ENCODE measurements at regions of chr6 and their contacts with region 1.

Region 1: GRCh38 chr6:110039364-110039980 is 61.4 kb downstream of the GPR6 start:
- DNase-seq: peak; percentile 77
- H3K4me3 ChIP-seq: peak overlapping the region in 1 of 2 experiments; percentile 54; a peak in 1 of 4 replicates
- H3K27ac ChIP-seq: no peak overlapping the region
- H3K4me1 ChIP-seq: peaks cover 0 to 2% of the 10 kb centered on the region in 2 experiments; a peak in 1 of 4 replicates
- H3K27me3 ChIP-seq: no peaks in the 10 kb centered on the region
- CTCF ChIP-seq: peak; percentile 98
- EP300 ChIP-seq: no peak
- RAD21 ChIP-seq: peak; percentile 98

Region 2: DNA sequence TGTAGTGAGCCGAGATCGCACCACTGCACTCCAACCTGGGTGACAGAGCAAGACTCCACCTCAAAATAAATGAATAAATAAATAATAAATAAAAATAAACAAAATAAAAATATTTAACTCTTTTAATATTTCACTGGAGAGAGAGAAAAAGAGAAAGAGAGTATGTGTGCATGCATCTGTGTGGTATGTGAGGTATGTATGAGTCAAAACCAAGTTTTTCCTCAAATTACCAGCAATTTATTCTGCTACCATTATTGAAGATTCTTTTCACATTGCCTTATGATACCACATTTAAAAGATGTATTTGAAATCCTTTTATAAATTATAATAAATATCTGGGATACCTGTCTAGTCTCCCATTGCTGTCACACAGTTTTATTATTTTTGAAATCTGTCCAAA is 779.3 kb before region 1 on chr6:
- CTCF ChIA-PET with region 1: no interaction called
- POLR2A ChIA-PET with region 1: no interaction called
- DNase-seq: no peak
- H3K4me3 ChIP-seq: no peak overlapping the region
- H3K27ac ChIP-seq: no peak overlapping the region; a peak in 2 of 4 replicates
- H3K4me1 ChIP-seq: peaks cover 3 to 4% of the 10 kb centered on the region in 2 experiments; a peak in 2 of 4 replicates
- H3K27me3 ChIP-seq: no peaks in the 10 kb centered on the region
- CTCF ChIP-seq: no peak
- EP300 ChIP-seq: no peak
- RAD21 ChIP-seq: no peak

Region 3: GRCh38 chr6:109526905-109527628 is 512.4 kb before region 1 on chr6:
- CTCF ChIA-PET with region 1: interaction called, 19 read pairs
- POLR2A ChIA-PET with region 1: no interaction called
- DNase-seq: peak; percentile 46
- H3K4me3 ChIP-seq: no peak overlapping the region; a peak in 1 of 4 replicates
- H3K27ac ChIP-seq: no peak overlapping the region
- H3K4me1 ChIP-seq: no peaks in the 10 kb centered on the region
- H3K27me3 ChIP-seq: no peaks in the 10 kb centered on the region
- CTCF ChIP-seq: peak; percentile 73
- EP300 ChIP-seq: no peak
- RAD21 ChIP-seq: peak; percentile 85

Region 4: GRCh38 chr6:109705258-109705657 is 334.2 kb before region 1 on chr6:
- CTCF ChIA-PET with region 1: interaction called, 295 read pairs
- POLR2A ChIA-PET with region 1: interaction called, 3 read pairs
- DNase-seq: peak; percentile 76
- H3K4me3 ChIP-seq: peak overlapping the region in 1 of 2 experiments; percentile 50; a peak in 1 of 4 replicates
- H3K27ac ChIP-seq: no peak overlapping the region
- H3K4me1 ChIP-seq: no peaks in the 10 kb centered on the region; a peak in 1 of 4 replicates
- H3K27me3 ChIP-seq: no peaks in the 10 kb centered on the region
- CTCF ChIP-seq: peak; percentile 100
- EP300 ChIP-seq: no peak
- RAD21 ChIP-seq: peak; percentile 100

Region 5: GRCh38 chr6:109718991-109719390 is 320.5 kb before region 1 on chr6:
- CTCF ChIA-PET with region 1: interaction called, 57 read pairs
- POLR2A ChIA-PET with region 1: no interaction called
- DNase-seq: no peak
- H3K4me3 ChIP-seq: no peak overlapping the region
- H3K27ac ChIP-seq: no peak overlapping the region
- H3K4me1 ChIP-seq: peaks cover 0 to 10% of the 10 kb centered on the region in 2 experiments; a peak in 2 of 4 replicates
- H3K27me3 ChIP-seq: no peaks in the 10 kb centered on the region
- CTCF ChIP-seq: no peak
- EP300 ChIP-seq: no peak
- RAD21 ChIP-seq: no peak

Region 6: GRCh38 chr6:110013386-110013785 is 26.1 kb before region 1 on chr6:
- CTCF ChIA-PET with region 1: interaction called, 10 read pairs
- POLR2A ChIA-PET with region 1: no interaction called
- DNase-seq: no peak
- H3K4me3 ChIP-seq: no peak overlapping the region
- H3K27ac ChIP-seq: no peak overlapping the region
- H3K4me1 ChIP-seq: no peaks in the 10 kb centered on the region
- H3K27me3 ChIP-seq: no peaks in the 10 kb centered on the region; the same call in 1 of the 2 replicates
- CTCF ChIP-seq: no peak
- EP300 ChIP-seq: no peak
- RAD21 ChIP-seq: no peak

Region 7: DNA sequence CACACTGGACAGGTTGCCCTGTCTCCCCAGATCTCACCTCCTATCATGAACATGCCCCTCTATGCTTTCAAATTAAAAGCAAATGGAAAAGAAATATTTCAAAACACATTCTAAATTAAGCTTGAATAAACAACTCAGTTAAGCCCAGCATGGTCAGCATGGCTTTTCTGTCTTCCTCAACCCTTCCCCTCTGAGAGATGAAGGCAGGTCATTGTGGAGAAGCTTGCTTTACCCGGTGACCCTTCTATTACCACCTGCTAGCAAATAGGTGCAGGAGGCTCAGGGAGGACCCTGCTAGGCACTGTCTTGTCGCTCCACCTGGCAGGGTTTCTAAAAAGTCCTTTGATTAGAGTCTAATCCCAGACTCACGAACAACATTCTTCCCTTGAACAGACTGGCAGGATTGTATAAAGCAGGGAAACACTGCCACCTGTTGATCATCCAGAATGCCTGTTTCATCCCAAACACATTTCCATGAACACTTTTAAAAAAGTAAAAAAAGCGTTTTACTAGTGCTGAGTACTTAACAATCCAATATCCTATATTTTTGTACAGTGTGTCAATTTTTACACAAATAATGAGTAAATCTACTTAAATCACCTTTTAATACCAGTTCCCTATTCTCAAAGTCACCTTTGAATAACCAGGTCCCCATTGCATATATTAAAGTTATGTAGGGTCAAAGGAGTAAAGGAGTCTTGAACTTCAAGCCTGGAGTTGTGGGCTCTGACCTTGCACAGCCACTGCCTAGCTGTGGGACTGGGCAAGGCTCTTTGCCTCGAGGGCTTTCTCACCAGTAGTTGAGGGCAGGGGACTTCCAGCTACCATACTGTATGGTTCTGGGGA is 14.1 kb after region 1 on chr6:
- CTCF ChIA-PET with region 1: interaction called, 50 read pairs
- POLR2A ChIA-PET with region 1: no interaction called
- DNase-seq: peak; percentile 59
- H3K4me3 ChIP-seq: no peak overlapping the region
- H3K27ac ChIP-seq: no peak overlapping the region
- H3K4me1 ChIP-seq: no peaks in the 10 kb centered on the region; a peak in 2 of 4 replicates
- H3K27me3 ChIP-seq: no peaks in the 10 kb centered on the region
- CTCF ChIP-seq: peak; percentile 80
- EP300 ChIP-seq: no peak
- RAD21 ChIP-seq: peak; percentile 85

Region 8: DNA sequence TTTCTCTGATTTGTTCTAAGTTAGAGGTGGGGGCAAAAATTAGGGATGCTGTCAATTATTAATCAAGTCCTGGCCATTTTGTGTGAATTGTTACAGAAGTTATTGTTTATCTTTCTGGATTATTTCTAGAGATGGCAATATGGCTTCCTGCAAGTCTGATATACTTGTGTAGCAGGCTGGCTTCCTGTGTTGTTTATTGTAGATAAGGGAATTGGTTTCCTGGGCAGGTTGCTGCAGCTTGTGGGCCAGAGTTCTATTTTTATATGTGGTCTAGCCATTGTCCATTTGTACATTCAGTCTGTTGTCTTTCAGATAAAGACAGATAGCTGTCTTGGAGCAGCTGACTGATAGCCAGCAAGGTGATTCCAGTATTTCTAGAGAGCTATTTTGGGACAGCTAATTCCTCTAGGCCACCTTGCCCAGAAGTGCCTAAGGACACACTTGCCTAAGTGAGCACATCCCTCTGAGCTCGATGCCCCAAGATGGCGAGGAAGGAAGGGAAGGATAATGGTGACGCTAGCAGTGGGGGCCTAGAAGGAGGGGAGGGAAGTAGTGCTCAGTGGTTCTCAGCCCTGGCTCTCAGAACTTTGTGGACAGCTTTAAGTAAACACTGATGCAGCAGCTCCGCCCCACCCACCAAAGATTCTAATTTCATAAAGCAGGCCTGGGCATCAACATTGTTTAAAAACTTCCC is 350.4 kb after region 1 on chr6:
- CTCF ChIA-PET with region 1: interaction called, 97 read pairs
- POLR2A ChIA-PET with region 1: no interaction called
- DNase-seq: no peak
- H3K4me3 ChIP-seq: no peak overlapping the region
- H3K27ac ChIP-seq: no peak overlapping the region
- H3K4me1 ChIP-seq: peaks cover 0 to 4% of the 10 kb centered on the region in 2 experiments; a peak in 2 of 4 replicates
- H3K27me3 ChIP-seq: no peaks in the 10 kb centered on the region
- CTCF ChIP-seq: no peak
- EP300 ChIP-seq: no peak
- RAD21 ChIP-seq: no peak